ENCODE measurements at regions of chr6 and their contacts with region 1.

Region 1: GRCh38 chr6:36851149-36851614 is 11.9 kb upstream of the CPNE5 start:
- DNase-seq: peak in 1 of 2 experiments; percentile 71
- H3K4me3 ChIP-seq: no peak overlapping the region
- H3K27ac ChIP-seq: no peak overlapping the region
- H3K4me1 ChIP-seq: peaks cover 7 to 17% (median 9%) of the 10 kb centered on the region in 4 experiments
- H3K27me3 ChIP-seq: peaks cover 0 to 9% (median 0%) of the 10 kb centered on the region in 4 experiments; a peak in 2 of 7 replicates
- CTCF ChIP-seq: peak in 2 of 3 experiments; percentile 75 to 85; a peak in 3 of 4 replicates
- EP300 ChIP-seq: no peak
- POLR2A ChIP-seq: no peak
- RAD21 ChIP-seq: peak; percentile 81 to 89

Region 2: DNA sequence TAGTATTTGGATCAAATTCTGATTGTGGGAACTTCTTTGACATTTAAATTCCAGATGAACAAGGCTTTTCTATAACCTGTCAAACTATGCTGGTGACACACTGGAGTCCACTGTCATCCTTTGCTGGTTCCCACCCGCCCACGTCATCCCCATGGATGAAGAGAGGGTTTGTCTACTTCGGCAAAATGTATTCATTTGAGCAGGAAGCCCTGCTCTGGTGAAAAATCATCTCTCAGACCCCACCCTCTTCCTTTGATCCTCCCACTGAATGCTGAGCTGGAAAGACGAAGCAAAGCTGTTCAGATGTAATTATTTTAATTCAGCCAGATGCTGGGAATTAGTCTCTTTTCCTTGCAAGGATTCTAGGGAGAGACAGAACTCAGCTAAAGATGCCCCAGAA is 62.4 kb before region 1 on chr6:
- CTCF ChIA-PET with region 1: interaction called, 161 read pairs
- POLR2A ChIA-PET with region 1: interaction called, 3 read pairs
- DNase-seq: no peak
- H3K4me3 ChIP-seq: no peak overlapping the region
- H3K27ac ChIP-seq: no peak overlapping the region
- H3K4me1 ChIP-seq: peaks cover 8 to 35% (median 19%) of the 10 kb centered on the region in 4 experiments
- H3K27me3 ChIP-seq: no peaks in the 10 kb centered on the region
- CTCF ChIP-seq: no peak
- EP300 ChIP-seq: no peak
- POLR2A ChIP-seq: no peak
- RAD21 ChIP-seq: no peak

Region 3: GRCh38 chr6:36793913-36794712 is 57.1 kb before region 1 on chr6:
- CTCF ChIA-PET with region 1: interaction called, 161 read pairs
- POLR2A ChIA-PET with region 1: interaction called, 3 read pairs
- DNase-seq: no peak
- H3K4me3 ChIP-seq: peak overlapping the region in 3 of 4 experiments; percentile 9 to 49 (median 14); a peak in 5 of 8 replicates
- H3K27ac ChIP-seq: 0 out of 2 replicates have a peak overlapping the region, but pooled peaks have one; percentile 30
- H3K4me1 ChIP-seq: peaks cover 4 to 37% (median 25%) of the 10 kb centered on the region in 4 experiments
- H3K27me3 ChIP-seq: no peaks in the 10 kb centered on the region
- CTCF ChIP-seq: no peak
- EP300 ChIP-seq: no peak
- POLR2A ChIP-seq: no peak
- RAD21 ChIP-seq: no peak

Region 4: DNA sequence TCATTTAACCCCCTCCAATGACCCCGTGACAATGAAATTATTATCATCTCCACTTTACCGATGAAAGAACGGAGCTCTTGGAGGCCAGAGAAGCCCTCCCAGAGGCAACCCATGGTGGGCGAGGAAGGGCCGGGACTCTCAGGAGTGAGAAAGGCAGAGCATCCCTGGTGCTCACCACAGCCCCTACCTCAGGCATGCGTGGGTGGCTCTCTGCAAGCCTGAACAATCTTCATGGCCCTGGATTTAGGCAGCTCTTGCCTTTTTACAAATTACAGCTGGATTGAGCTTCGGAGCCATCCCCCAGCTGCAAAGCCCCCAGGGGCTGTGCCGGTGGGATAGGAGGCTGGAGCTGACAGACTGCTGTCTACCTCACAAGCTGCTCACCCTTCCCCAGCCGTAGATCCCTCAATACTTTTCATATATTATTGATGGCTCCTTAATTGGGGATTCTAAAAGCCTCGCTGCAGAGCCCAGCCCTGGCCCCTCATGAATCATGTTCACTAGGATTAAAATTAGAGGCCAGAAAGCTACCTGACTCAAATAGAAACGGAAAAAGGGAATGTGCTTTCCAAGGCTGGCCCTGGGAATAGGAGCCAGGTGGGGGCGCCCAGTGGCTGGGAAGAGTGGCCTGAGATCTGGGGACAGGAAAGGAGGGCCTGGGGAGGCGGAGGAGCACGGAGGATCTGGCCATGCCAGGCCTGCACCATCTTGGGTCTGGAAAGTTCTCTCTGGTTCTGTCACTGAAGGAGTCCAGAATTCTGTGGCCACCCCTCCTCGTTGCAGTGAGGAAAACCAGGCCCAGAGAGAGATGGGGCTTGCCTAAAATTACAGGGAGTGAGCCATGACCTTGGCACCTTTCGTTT is 41.0 kb before region 1 on chr6:
- CTCF ChIA-PET with region 1: interaction called, 154 read pairs
- POLR2A ChIA-PET with region 1: interaction called, 12 read pairs
- DNase-seq: no peak
- H3K4me3 ChIP-seq: no peak overlapping the region
- H3K27ac ChIP-seq: no peak overlapping the region
- H3K4me1 ChIP-seq: peaks cover 1 to 11% (median 3%) of the 10 kb centered on the region in 4 experiments; a peak in 4 of 7 replicates
- H3K27me3 ChIP-seq: no peaks in the 10 kb centered on the region; a peak in 2 of 7 replicates
- CTCF ChIP-seq: peak; percentile 44 to 48 (median 44)
- EP300 ChIP-seq: no peak
- POLR2A ChIP-seq: no peak
- RAD21 ChIP-seq: peak; percentile 61 to 67

Region 5: GRCh38 chr6:36827261-36828079 is 23.7 kb before region 1 on chr6:
- CTCF ChIA-PET with region 1: interaction called, 121 read pairs
- POLR2A ChIA-PET with region 1: no interaction called
- DNase-seq: no peak
- H3K4me3 ChIP-seq: no peak overlapping the region
- H3K27ac ChIP-seq: no peak overlapping the region
- H3K4me1 ChIP-seq: no peaks in the 10 kb centered on the region; a peak in 1 of 7 replicates
- H3K27me3 ChIP-seq: no peaks in the 10 kb centered on the region; a peak in 1 of 7 replicates
- CTCF ChIP-seq: no peak
- EP300 ChIP-seq: no peak
- POLR2A ChIP-seq: no peak
- RAD21 ChIP-seq: no peak

Region 6: GRCh38 chr6:36839749-36840431 is 11.3 kb before region 1 on chr6:
- CTCF ChIA-PET with region 1: interaction called, 121 read pairs
- POLR2A ChIA-PET with region 1: interaction called, 9 read pairs
- DNase-seq: peak in 1 of 2 experiments; percentile 63
- H3K4me3 ChIP-seq: peak overlapping the region; percentile 46 to 79 (median 58)
- H3K27ac ChIP-seq: no peak overlapping the region
- H3K4me1 ChIP-seq: peaks cover 0 to 12% (median 7%) of the 10 kb centered on the region in 4 experiments; a peak in 6 of 7 replicates
- H3K27me3 ChIP-seq: peaks cover 22 to 50% (median 44%) of the 10 kb centered on the region in 4 experiments
- CTCF ChIP-seq: peak in 2 of 3 experiments; percentile 5 to 31; a peak in 3 of 4 replicates
- EP300 ChIP-seq: no peak
- POLR2A ChIP-seq: no peak
- RAD21 ChIP-seq: no peak

Region 7: GRCh38 chr6:36874443-36875249 is 23.5 kb after region 1 on chr6 and contains the start of gene PPIL1:
- CTCF ChIA-PET with region 1: interaction called, 77 read pairs
- POLR2A ChIA-PET with region 1: interaction called, 7 read pairs
- DNase-seq: peak in 1 of 2 experiments; percentile 82
- H3K4me3 ChIP-seq: peak within 1 kb of the TSS; percentile 83 to 91 (median 87)
- H3K27ac ChIP-seq: peak within 1 kb of the TSS; percentile 93
- H3K4me1 ChIP-seq: peaks cover 0 to 4% (median 1%) of the 10 kb centered on the region in 4 experiments; a peak in 3 of 7 replicates
- H3K27me3 ChIP-seq: no peaks in the 10 kb centered on the region
- CTCF ChIP-seq: no peak
- EP300 ChIP-seq: no peak
- POLR2A ChIP-seq: peak; percentile 77 to 81; a peak in 2 of 3 replicates
- RAD21 ChIP-seq: no peak
- total RNA-seq, gene PPIL1: 85.8 and 86.5 TPM in 2 replicates

Region 8: DNA sequence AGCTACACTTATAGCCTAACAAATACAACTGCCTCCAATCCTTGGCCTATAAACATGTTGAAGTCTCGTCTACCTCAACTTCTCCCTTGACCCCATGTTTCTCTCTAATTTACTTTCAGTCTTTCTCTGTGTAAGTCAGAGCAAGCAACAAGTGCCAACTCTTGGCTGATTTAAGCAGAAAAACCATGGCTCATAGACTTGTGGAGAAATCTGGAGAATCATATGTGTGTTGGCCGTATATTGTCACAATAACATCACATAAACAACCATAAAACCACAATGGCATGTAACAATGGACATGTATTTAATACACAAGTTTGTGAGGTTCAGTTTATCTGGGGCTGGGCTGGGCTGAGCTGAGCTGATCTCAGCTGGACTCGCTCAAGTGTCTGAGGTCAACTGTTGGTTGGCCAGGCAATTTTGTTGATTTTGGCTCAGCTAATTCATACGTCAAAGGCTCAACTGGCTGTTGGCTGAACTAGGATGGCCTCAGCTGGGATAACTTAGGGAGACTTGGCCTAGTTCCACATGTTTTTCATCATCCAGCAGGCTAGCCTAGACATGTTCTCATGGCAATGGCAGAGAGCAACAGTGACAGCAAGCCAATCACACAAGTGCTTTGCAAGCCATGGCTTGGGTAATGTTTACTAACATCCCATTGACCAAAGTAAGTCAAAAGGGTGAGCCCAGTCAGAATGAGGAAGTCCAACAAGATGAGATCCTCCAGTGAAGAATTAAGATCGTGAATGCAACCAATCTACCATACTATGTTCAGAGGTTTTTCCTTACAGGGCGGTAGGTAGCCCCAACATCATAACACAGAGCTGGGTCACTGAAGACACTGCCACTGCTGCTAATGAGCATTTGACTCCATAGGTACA is 393.5 kb after region 1 on chr6:
- CTCF ChIA-PET with region 1: no interaction called
- POLR2A ChIA-PET with region 1: no interaction called
- DNase-seq: no peak
- H3K4me3 ChIP-seq: no peak overlapping the region
- H3K27ac ChIP-seq: peak overlapping the region; percentile 16; the same call in 1 of the 2 replicates
- H3K4me1 ChIP-seq: no peaks in the 10 kb centered on the region
- H3K27me3 ChIP-seq: no peaks in the 10 kb centered on the region
- CTCF ChIP-seq: no peak
- EP300 ChIP-seq: no peak
- POLR2A ChIP-seq: no peak
- RAD21 ChIP-seq: no peak

Measured in H1 (cell line).